ENCODE measurements at regions of chr19 and their contacts with region 1.

Region 1: DNA sequence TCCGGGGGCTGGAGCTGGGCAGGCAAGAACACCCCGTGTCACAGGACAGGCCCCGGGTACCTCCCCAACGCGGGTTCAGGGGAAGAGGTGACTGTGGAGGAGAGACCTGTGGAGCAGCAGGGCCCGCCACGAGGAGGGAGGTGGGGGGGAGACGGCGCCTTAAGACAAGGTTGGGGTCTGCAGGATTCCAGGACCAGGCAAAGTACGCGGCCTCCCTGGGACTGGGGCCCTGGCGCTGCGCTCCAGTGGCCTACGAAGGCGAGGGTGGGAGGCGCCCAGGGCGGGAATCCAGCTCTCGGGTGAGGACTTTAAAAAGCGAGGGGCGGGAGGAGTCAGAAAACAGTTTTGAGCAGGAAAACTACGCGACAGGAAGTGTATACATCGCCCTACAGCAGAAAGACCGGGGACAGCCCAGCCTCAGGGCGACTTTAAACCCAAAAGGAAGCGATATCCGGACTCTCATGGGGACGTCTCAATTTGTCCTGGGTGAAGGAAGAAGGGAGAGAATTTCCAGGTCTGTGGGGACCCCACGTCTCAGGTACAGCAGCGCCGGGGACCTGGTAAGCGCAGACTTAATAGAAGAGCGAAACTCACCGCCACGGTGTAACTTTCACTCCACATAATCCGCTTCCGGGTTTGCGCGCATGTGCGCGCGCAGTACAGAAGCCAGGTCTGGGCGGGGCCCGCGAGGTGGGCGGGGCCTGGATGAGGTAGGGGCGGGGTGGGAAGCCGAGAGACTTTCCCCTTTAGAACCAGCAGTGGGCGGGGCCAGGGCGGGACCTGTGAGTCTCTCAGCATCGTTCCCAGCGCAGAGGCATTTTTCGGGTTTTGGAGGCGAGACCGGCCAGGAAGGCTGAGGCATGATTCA is at the start of gene ZNF83:
- DNase-seq: peak; percentile 85 to 96 (median 91)
- ATAC-seq: peak; percentile 95
- H3K4me3 ChIP-seq: peak within 1 kb of the TSS; percentile 68 to 97
- H3K4me3 Mint-ChIP-seq: peak within 1 kb of the TSS; percentile 95
- H3K27ac ChIP-seq: peak within 1 kb of the TSS; percentile 90 to 99
- H3K27ac Mint-ChIP-seq: peak within 1 kb of the TSS; percentile 98
- H3K4me1 ChIP-seq: peaks cover 14% of the 10 kb centered on the region
- H3K4me1 Mint-ChIP-seq: peaks cover 26% of the 10 kb centered on the region
- H3K27me3 ChIP-seq: no peaks in the 10 kb centered on the region
- H3K27me3 Mint-ChIP-seq: no peaks in the 10 kb centered on the region
- CTCF ChIP-seq: no peak
- total RNA-seq, gene ZNF83: 49.4 to 51.2 TPM

Region 2: GRCh38 chr19:52269338-52270261 is 368.4 kb before region 1 on chr19 and contains the start of gene ZNF766:
- CTCF ChIA-PET with region 1: no interaction called
- POLR2A ChIA-PET with region 1: no interaction called
- intact Hi-C with region 1: loop called in 1 of 2 experiments (anchors 2 kb)
- DNase-seq: peak; percentile 95 to 98 (median 97)
- ATAC-seq: peak; percentile 98
- H3K4me3 ChIP-seq: peak within 1 kb of the TSS; percentile 89 to 95
- H3K4me3 Mint-ChIP-seq: peak within 1 kb of the TSS; percentile 98
- H3K27ac ChIP-seq: peak within 1 kb of the TSS; percentile 96
- H3K27ac Mint-ChIP-seq: peak within 1 kb of the TSS; percentile 98
- H3K4me1 ChIP-seq: peaks cover 13% of the 10 kb centered on the region
- H3K4me1 Mint-ChIP-seq: peaks cover 41% of the 10 kb centered on the region
- H3K27me3 ChIP-seq: no peaks in the 10 kb centered on the region
- H3K27me3 Mint-ChIP-seq: no peaks in the 10 kb centered on the region
- CTCF ChIP-seq: no peak
- total RNA-seq, gene ZNF766: 50.8 to 52.6 TPM

Region 3: GRCh38 chr19:52464798-52465470 is 173.0 kb before region 1 on chr19:
- CTCF ChIA-PET with region 1: no interaction called
- POLR2A ChIA-PET with region 1: no interaction called
- intact Hi-C with region 1: no loop called
- DNase-seq: no peak
- ATAC-seq: no peak
- H3K4me3 ChIP-seq: no peak overlapping the region
- H3K4me3 Mint-ChIP-seq: no peak overlapping the region
- H3K27ac ChIP-seq: no peak overlapping the region
- H3K27ac Mint-ChIP-seq: no peak overlapping the region
- H3K4me1 ChIP-seq: no peaks in the 10 kb centered on the region
- H3K4me1 Mint-ChIP-seq: no peaks in the 10 kb centered on the region
- H3K27me3 ChIP-seq: no peaks in the 10 kb centered on the region
- H3K27me3 Mint-ChIP-seq: no peaks in the 10 kb centered on the region
- CTCF ChIP-seq: no peak

Region 4: GRCh38 chr19:52535771-52536447 is 102.0 kb before region 1 on chr19:
- CTCF ChIA-PET with region 1: no interaction called
- POLR2A ChIA-PET with region 1: no interaction called
- intact Hi-C with region 1: loop called (anchors 1 to 2 kb)
- DNase-seq: peak; percentile 76 to 94 (median 92)
- ATAC-seq: peak; percentile 98
- H3K4me3 ChIP-seq: peak overlapping the region; percentile 65 to 90
- H3K4me3 Mint-ChIP-seq: peak overlapping the region; percentile 96
- H3K27ac ChIP-seq: peak overlapping the region; percentile 62 to 85
- H3K27ac Mint-ChIP-seq: peak overlapping the region; percentile 95
- H3K4me1 ChIP-seq: peaks cover 10% of the 10 kb centered on the region
- H3K4me1 Mint-ChIP-seq: peaks cover 48% of the 10 kb centered on the region
- H3K27me3 ChIP-seq: no peaks in the 10 kb centered on the region
- H3K27me3 Mint-ChIP-seq: no peaks in the 10 kb centered on the region
- CTCF ChIP-seq: peak; percentile 19

Region 5: GRCh38 chr19:52601025-52601973 is 36.7 kb before region 1 on chr19:
- CTCF ChIA-PET with region 1: interaction called, 6 read pairs
- POLR2A ChIA-PET with region 1: no interaction called
- intact Hi-C with region 1: loop called (anchors 1 kb)
- DNase-seq: peak; percentile 86 to 96 (median 93)
- ATAC-seq: peak; percentile 99
- H3K4me3 ChIP-seq: peak overlapping the region; percentile 96 to 98
- H3K4me3 Mint-ChIP-seq: peak overlapping the region; percentile 97
- H3K27ac ChIP-seq: peak overlapping the region; percentile 71
- H3K27ac Mint-ChIP-seq: peak overlapping the region; percentile 90
- H3K4me1 ChIP-seq: peaks cover 13% of the 10 kb centered on the region
- H3K4me1 Mint-ChIP-seq: peaks cover 44% of the 10 kb centered on the region
- H3K27me3 ChIP-seq: no peaks in the 10 kb centered on the region
- H3K27me3 Mint-ChIP-seq: no peaks in the 10 kb centered on the region
- CTCF ChIP-seq: peak; percentile 49

Region 6: GRCh38 chr19:52786457-52787359 is 148.8 kb after region 1 on chr19 and contains the start of gene ZNF600:
- CTCF ChIA-PET with region 1: no interaction called
- POLR2A ChIA-PET with region 1: no interaction called
- intact Hi-C with region 1: loop called in 1 of 2 experiments (anchors 1 kb)
- DNase-seq: peak; percentile 60 to 85 (median 76)
- ATAC-seq: peak; percentile 96
- H3K4me3 ChIP-seq: peak within 1 kb of the TSS; percentile 80 to 84
- H3K4me3 Mint-ChIP-seq: peak within 1 kb of the TSS; percentile 92
- H3K27ac ChIP-seq: peak within 1 kb of the TSS; percentile 54 to 79
- H3K27ac Mint-ChIP-seq: peak within 1 kb of the TSS; percentile 81
- H3K4me1 ChIP-seq: no peaks in the 10 kb centered on the region
- H3K4me1 Mint-ChIP-seq: peaks cover 29% of the 10 kb centered on the region
- H3K27me3 ChIP-seq: no peaks in the 10 kb centered on the region
- H3K27me3 Mint-ChIP-seq: no peaks in the 10 kb centered on the region
- CTCF ChIP-seq: no peak
- total RNA-seq, gene ZNF600: 17.5 to 17.8 TPM

Measured in CD8-positive, alpha-beta T cell (primary cell).